Sigmoid colon (tissue), 7 donors: ENCODE measurements at regions of chr3 and their contacts with region 1.

Region 1: GRCh38 chr3:146747928-146748327 is 142.8 kb upstream of the PLSCR5 start:
- DNase-seq: no peak
- H3K4me3 ChIP-seq: no peak overlapping the region
- H3K27ac ChIP-seq: no peak overlapping the region
- H3K4me1 ChIP-seq: peaks cover 0 to 13% (median 3%) of the 10 kb centered on the region in 4 donors
- H3K27me3 ChIP-seq: no peaks in the 10 kb centered on the region
- CTCF ChIP-seq: peak in 3 of 4 experiments; percentile 13 to 31 (median 24)
- EP300 ChIP-seq: no peak
- POLR2A ChIP-seq: no peak

Region 2: DNA sequence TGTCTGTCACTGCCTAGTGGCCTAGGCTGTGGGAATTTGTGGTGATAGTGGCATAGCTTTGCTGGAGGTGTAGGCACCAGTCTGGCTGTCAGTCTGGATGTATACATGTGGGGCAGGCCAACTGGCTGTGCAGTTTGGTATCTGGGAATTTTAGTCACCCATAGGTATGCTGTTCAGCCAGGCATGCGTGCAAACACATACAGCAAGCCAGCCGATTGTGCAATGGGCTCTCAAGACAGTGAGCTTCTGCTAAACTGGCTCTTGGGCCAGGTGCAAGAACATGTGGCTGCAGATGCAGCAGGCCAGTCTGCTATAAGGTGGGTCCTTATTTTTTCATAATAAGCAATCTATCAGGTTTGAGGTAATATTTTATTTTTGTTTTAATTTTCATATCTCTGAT is 55.7 kb before region 1 on chr3:
- intact Hi-C with region 1: no loop called
- DNase-seq: no peak
- H3K4me3 ChIP-seq: no peak overlapping the region
- H3K27ac ChIP-seq: no peak overlapping the region
- H3K4me1 ChIP-seq: no peaks in the 10 kb centered on the region
- H3K27me3 ChIP-seq: no peaks in the 10 kb centered on the region
- CTCF ChIP-seq: no peak
- EP300 ChIP-seq: no peak
- POLR2A ChIP-seq: no peak

Region 3: GRCh38 chr3:147191795-147192385 is 444.0 kb after region 1 on chr3:
- intact Hi-C with region 1: loop called (anchors 5 kb)
- DNase-seq: no peak
- H3K4me3 ChIP-seq: no peak overlapping the region
- H3K27ac ChIP-seq: no peak overlapping the region
- H3K4me1 ChIP-seq: peaks cover 0 to 2% (median 0%) of the 10 kb centered on the region in 4 donors
- H3K27me3 ChIP-seq: no peaks in the 10 kb centered on the region
- CTCF ChIP-seq: peak in 3 of 4 experiments; percentile 22 to 54 (median 44)
- EP300 ChIP-seq: no peak
- POLR2A ChIP-seq: no peak